ENCODE measurements at regions of chr1 and their contacts with region 1.

Region 1: DNA sequence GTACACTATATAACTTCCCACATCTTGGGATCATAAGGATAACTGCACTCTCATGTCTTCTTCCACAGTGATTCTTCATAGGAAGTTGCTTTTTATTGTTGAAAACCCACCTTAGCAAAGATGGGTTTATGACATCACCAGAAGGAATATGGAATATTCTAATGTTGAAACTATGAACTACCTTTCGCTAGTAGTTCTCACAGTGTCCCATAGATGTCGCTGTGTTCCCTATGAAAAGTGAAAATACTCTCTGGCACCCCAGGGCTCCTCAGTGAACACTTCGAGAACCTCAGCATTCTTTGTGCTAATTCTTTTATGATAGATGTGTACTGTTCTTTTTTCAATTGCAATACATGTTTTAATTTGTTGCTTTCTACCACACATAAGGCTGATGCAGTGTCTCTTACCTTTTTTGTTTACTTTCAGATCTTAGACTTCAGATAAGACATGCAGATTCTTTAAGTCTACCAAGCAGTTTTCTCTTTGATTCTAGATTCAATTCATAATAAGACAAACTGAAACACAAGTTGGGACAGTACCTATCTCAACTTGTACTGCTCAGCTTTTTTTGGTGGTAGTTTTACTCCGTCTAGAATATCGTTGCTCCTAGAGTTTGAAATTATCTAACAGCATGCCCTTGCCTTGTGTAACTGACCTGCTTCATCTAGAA is 90.8 kb downstream of the GTF2B start:
- DNase-seq: peak; percentile 12

Region 2: DNA sequence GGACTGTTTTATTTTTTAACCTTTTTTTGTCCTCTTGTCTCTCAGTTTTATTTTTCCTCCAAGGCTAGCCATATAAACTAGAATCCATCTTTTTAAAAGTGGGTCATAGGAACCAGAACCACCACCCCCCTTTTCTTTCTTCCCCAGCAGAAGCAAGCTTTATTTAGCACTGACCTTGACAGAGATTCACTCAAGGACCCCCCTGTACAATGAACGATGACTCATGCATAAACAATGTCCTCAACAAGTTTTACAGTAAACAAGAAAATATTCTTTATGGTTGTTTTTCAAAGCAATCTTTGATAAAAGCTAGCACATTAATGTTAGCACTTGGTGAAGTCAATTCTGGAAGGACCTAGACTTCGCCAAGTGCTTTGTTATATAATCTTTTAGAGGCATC is 102.4 kb before region 1 on chr1:
- in situ Hi-C with region 1: loop called (anchors 5 kb)
- DNase-seq: no peak

Region 3: GRCh38 chr1:88731475-88732269 is 68.8 kb before region 1 on chr1:
- in situ Hi-C with region 1: loop called (anchors 5 kb)
- DNase-seq: peak; percentile 83

Measured in G401 (cell line).